Naive thymus-derived CD4-positive, alpha-beta T cell (primary cell): ENCODE measurements at regions of chr9 and their contacts with region 1.

Region 1: GRCh38 chr9:88388172-88388885 is at the start of gene SPIN1:
- DNase-seq: peak; percentile 66 to 94 (median 87)
- ATAC-seq: peak; percentile 87
- H3K4me3 ChIP-seq: peak within 1 kb of the TSS; percentile 97
- H3K4me3 Mint-ChIP-seq: peak within 1 kb of the TSS; percentile 91 to 98 (median 95)
- H3K27ac ChIP-seq: peak within 1 kb of the TSS; percentile 67
- H3K27ac Mint-ChIP-seq: peak within 1 kb of the TSS; percentile 90 to 97 (median 95)
- H3K4me1 ChIP-seq: peaks cover 8 to 11% of the 10 kb centered on the region in 2 donors
- H3K4me1 Mint-ChIP-seq: peaks cover 23 to 49% (median 43%) of the 10 kb centered on the region in 7 donors
- H3K27me3 ChIP-seq: no peaks in the 10 kb centered on the region
- H3K27me3 Mint-ChIP-seq: no peaks in the 10 kb centered on the region
- total RNA-seq, gene SPIN1: 27.5 to 38.4 (median 34.9) TPM

Region 2: GRCh38 chr9:87684627-87685219 is 703.6 kb before region 1 on chr9:
- CTCF ChIA-PET with region 1: no interaction called
- POLR2A ChIA-PET with region 1: no interaction called
- intact Hi-C with region 1: loop called in 1 of 2 experiments (anchors 5 kb)
- DNase-seq: no peak
- ATAC-seq: no peak
- H3K4me3 ChIP-seq: no peak overlapping the region
- H3K4me3 Mint-ChIP-seq: peak overlapping the region in 5 of 10 donors; percentile 38 to 80 (median 73)
- H3K27ac ChIP-seq: no peak overlapping the region
- H3K27ac Mint-ChIP-seq: peak overlapping the region in 4 of 9 donors; percentile 68 to 91 (median 77)
- H3K4me1 ChIP-seq: peaks cover 0 to 13% of the 10 kb centered on the region in 2 donors
- H3K4me1 Mint-ChIP-seq: peaks cover 13 to 37% (median 24%) of the 10 kb centered on the region in 7 donors
- H3K27me3 ChIP-seq: no peaks in the 10 kb centered on the region
- H3K27me3 Mint-ChIP-seq: peaks cover 0 to 13% (median 0%) of the 10 kb centered on the region in 5 donors

Region 3: DNA sequence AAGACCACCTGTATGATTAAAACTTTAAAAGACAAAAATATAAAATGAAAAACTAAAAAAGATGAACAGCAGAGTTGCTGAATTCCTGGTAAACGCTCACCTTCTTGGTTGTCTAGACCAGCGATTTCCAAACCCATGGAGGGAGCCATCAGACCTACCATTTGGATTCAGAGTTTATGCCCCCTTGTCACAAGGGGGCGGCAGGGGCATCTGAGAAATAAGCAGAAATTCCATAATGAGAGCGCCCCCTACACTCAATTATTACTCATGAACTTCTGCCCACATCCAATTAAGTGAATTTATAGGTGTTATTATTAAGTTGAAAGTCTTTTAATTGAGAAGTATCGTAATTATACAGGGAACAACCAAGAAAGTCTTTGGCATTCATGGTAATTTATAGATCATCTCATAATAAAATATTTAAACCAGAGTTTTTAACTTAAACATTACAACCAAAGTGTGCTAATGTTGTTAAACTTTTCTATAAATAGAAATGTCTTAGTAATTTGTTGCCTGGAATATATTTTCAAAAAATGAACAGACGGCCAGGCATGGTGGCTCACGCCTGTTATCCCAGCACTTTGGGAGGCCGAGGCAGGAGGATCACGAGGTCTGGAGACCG is 214.8 kb before region 1 on chr9:
- CTCF ChIA-PET with region 1: no interaction called
- POLR2A ChIA-PET with region 1: no interaction called
- intact Hi-C with region 1: loop called (anchors 1 kb)
- DNase-seq: peak in 8 of 9 donors; percentile 28 to 64 (median 52)
- ATAC-seq: peak; percentile 72
- H3K4me3 ChIP-seq: no peak overlapping the region
- H3K4me3 Mint-ChIP-seq: no peak overlapping the region
- H3K27ac ChIP-seq: no peak overlapping the region
- H3K27ac Mint-ChIP-seq: no peak overlapping the region
- H3K4me1 ChIP-seq: no peaks in the 10 kb centered on the region
- H3K4me1 Mint-ChIP-seq: peaks cover 0 to 9% (median 2%) of the 10 kb centered on the region in 7 donors
- H3K27me3 ChIP-seq: no peaks in the 10 kb centered on the region
- H3K27me3 Mint-ChIP-seq: peaks cover 0 to 42% (median 7%) of the 10 kb centered on the region in 5 donors

Region 4: DNA sequence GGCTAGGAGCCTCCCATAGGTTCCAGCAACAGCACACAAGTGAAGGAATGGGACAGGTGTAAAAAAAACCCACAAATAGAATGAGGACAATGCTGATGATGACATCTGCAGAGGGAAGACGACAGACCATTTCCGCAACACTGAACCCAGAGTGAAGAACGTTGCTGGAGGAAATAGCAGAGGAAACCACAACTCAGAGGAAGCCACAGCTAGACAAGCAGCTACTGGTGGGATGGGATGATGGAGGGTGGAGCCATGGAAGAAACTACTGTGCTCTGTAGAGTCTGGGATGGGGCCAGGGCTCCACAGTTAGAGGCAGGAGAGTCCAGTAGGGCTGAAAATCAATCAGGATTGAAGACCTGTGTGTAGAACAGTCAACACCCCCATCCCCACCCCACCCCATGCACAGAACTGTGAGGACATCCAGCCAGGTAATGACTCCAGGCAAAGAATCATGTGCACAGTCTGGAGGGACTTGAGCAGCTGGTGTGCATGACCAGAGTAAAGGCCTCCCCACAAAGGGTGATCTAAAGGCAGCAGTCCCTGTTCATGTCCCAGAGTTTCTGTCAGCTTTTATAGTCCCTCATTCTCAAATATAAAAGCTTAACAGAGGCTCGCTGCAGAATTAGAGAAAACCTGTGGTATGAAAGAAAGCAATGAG is 65.3 kb before region 1 on chr9:
- CTCF ChIA-PET with region 1: no interaction called
- POLR2A ChIA-PET with region 1: interaction called, 5 read pairs
- intact Hi-C with region 1: loop called in 1 of 2 experiments (anchors 1 kb)
- DNase-seq: peak; percentile 11 to 84 (median 73)
- ATAC-seq: peak; percentile 98
- H3K4me3 ChIP-seq: peak overlapping the region; percentile 2
- H3K4me3 Mint-ChIP-seq: peak overlapping the region; percentile 35 to 84 (median 67)
- H3K27ac ChIP-seq: no peak overlapping the region
- H3K27ac Mint-ChIP-seq: peak overlapping the region; percentile 74 to 97 (median 87)
- H3K4me1 ChIP-seq: peaks cover 16 to 25% of the 10 kb centered on the region in 2 donors
- H3K4me1 Mint-ChIP-seq: peaks cover 26 to 50% (median 36%) of the 10 kb centered on the region in 7 donors
- H3K27me3 ChIP-seq: no peaks in the 10 kb centered on the region
- H3K27me3 Mint-ChIP-seq: no peaks in the 10 kb centered on the region

Region 5: DNA sequence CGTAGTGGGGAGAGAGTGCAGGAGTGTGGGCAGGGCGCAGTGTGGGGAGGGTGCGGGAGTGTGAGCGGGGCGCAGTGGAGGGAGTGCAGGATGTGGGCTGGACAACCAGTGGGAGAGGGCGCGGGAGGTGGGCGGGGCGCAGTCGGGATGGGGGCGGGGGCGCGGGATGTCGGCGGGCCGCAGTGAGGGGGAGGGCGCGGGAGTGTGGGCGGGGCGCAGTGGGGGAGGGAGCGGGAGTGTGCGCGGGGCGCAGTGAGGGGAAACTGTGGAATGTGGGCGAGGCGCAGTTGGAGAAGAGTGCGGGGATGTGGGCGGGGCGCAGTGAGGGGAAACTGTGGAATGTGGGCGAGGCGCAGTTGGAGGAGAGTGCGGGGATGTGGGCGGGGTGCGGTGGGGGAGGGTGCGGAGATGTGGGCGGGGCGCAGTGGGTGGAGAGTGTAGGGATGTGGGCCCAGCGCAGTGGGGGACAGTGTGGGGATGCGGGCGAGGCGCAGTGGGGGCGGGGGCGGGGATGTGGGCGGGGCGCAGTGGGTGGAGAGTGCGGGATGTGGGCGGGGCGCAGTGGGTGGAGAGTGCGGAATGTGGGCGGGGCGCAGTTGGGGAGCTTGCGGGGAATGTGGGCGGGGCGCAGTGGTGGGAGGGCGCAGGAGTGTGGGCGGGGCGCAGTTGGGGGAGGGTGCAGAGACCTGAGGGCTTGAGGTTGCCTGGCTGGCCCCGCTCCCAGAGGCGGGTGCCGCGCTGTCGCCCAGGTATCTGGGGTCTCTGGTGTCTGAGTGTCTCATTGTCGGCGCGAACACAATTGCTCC is 146.3 kb after region 1 on chr9 and contains the start of gene NXNL2:
- CTCF ChIA-PET with region 1: no interaction called
- POLR2A ChIA-PET with region 1: no interaction called
- intact Hi-C with region 1: loop called (anchors 2 to 5 kb)
- DNase-seq: peak in 8 of 9 donors; percentile 21 to 59 (median 48)
- ATAC-seq: peak; percentile 80
- H3K4me3 ChIP-seq: peak within 1 kb of the TSS; percentile 54
- H3K4me3 Mint-ChIP-seq: peak within 1 kb of the TSS; percentile 53 to 88 (median 72)
- H3K27ac ChIP-seq: no peak within 1 kb of the TSS
- H3K27ac Mint-ChIP-seq: peak within 1 kb of the TSS in 2 of 9 donors; percentile 55 to 62
- H3K4me1 ChIP-seq: peaks cover 0 to 12% of the 10 kb centered on the region in 2 donors
- H3K4me1 Mint-ChIP-seq: peaks cover 9 to 32% (median 20%) of the 10 kb centered on the region in 7 donors
- H3K27me3 ChIP-seq: no peaks in the 10 kb centered on the region
- H3K27me3 Mint-ChIP-seq: peaks cover 0 to 81% (median 24%) of the 10 kb centered on the region in 5 donors
- total RNA-seq, gene NXNL2: not detected